ENCODE measurements at regions of chr9 and their contacts with region 1.

Region 1: GRCh38 chr9:105425841-105426436 is 21.9 kb upstream of the FSD1L start:
- DNase-seq: no peak
- ATAC-seq: peak in 2 of 4 donors; percentile 44 to 59
- H3K4me3 ChIP-seq: no peak overlapping the region
- H3K27ac ChIP-seq: no peak overlapping the region
- H3K4me1 ChIP-seq: no peaks in the 10 kb centered on the region
- H3K27me3 ChIP-seq: no peaks in the 10 kb centered on the region
- CTCF ChIP-seq: peak; percentile 31 to 67 (median 46)
- POLR2A ChIP-seq: no peak

Region 2: GRCh38 chr9:105475302-105475701 is 49.4 kb after region 1 on chr9:
- intact Hi-C with region 1: loop called in 9 of 10 experiments (anchors 2 to 10 kb)
- DNase-seq: no peak
- ATAC-seq: no peak
- H3K4me3 ChIP-seq: no peak overlapping the region
- H3K27ac ChIP-seq: no peak overlapping the region
- H3K4me1 ChIP-seq: no peaks in the 10 kb centered on the region
- H3K27me3 ChIP-seq: no peaks in the 10 kb centered on the region
- CTCF ChIP-seq: peak in 10 of 12 donors; percentile 7 to 52 (median 35)
- POLR2A ChIP-seq: no peak

Region 3: GRCh38 chr9:105557771-105558610 is 132.1 kb after region 1 on chr9 and contains the start of gene FKTN:
- intact Hi-C with region 1: loop called in 2 of 10 experiments (anchors 10 kb)
- DNase-seq: peak; percentile 89 to 94 (median 92)
- ATAC-seq: peak; percentile 90 to 98 (median 98)
- H3K4me3 ChIP-seq: peak within 1 kb of the TSS; percentile 62 to 97 (median 82)
- H3K27ac ChIP-seq: peak within 1 kb of the TSS; percentile 42 to 87 (median 74)
- H3K4me1 ChIP-seq: peaks cover 0 to 13% (median 8%) of the 10 kb centered on the region in 12 donors
- H3K27me3 ChIP-seq: no peaks in the 10 kb centered on the region
- CTCF ChIP-seq: no peak
- POLR2A ChIP-seq: peak in 1 of 2 donors; percentile 40
- total RNA-seq, gene FKTN: 3.5 to 12.9 (median 7.2) TPM

Measured in heart left ventricle (tissue), 16 donors.